ENCODE measurements at regions of chr5 and their contacts with region 1.

Region 1: DNA sequence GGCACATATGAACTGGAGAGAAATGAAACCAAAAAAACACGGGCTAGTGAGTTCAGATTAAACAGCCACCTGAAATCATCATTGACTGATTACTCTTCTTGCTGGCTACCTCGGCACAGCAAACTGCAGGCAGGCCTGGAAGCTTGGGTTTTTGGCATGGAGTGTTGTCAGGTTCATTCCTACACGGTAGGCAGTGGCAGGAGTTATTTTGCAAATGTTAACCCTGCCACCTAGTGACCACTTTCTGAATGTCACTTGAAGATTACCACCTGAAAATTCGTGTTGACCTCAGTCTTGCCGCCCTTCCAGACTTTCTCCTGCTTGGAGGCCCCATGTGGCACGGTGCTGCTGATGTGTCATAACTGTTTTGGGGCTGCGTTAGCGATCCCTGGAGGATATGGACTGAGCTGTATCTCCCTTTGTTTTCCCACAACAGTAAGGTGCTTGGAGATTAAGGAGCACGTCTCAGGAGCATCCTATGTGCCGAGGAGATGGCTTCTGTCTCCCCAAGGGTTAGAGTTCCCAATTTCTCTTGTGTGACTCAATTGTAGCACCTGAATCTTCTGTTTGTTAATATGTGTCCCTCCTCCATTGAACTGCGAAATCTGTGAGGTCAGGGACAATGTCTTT is 12.7 kb upstream of the CD180 start:
- DNase-seq: peak; percentile 87
- H3K4me3 ChIP-seq: no peak overlapping the region
- H3K27ac ChIP-seq: no peak overlapping the region
- H3K4me1 ChIP-seq: peaks cover 55% of the 10 kb centered on the region
- CTCF ChIP-seq: peak; percentile 85

Region 2: DNA sequence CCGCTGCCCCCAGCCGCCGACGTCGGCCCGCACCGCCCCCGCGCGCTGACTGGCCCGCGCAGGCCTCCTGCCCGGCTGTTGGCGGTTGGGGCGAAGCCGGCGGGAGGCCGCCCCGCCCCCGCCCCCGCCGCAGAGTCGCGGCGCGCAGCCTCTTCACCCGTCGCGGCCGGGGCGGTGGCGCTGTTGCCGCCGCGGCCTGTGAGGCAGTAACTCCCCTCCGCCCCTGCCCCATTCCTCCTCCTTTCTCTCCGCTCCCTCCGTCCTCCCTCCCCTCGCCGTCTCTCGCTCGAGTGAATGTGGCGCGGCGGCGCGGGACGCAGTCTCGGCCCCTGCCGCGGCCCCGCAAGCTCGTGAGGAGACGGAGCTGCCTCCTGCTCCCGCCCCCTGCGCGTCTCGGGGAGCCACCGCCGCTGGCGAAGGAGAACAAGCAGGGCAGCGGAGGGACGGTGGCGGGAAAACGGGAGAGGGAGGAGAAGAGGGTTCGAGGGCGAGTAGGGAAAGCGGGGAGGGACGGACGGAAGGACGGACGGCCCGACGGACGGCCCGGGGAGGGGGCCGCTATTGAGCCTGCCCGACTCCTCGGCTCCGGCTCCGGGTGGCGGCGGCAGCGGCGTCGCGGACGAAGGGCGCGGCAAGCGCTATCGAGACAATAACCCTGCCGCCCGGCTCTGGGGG is 1283.5 kb before region 1 on chr5:
- CTCF ChIA-PET with region 1: no interaction called
- POLR2A ChIA-PET with region 1: interaction called, 3 read pairs
- intact Hi-C with region 1: loop called (anchors 10 kb)
- DNase-seq: peak; percentile 92
- H3K4me3 ChIP-seq: peak overlapping the region; percentile 83
- H3K27ac ChIP-seq: peak overlapping the region; percentile 97
- H3K4me1 ChIP-seq: peaks cover 30% of the 10 kb centered on the region
- CTCF ChIP-seq: peak; percentile 67

Region 3: DNA sequence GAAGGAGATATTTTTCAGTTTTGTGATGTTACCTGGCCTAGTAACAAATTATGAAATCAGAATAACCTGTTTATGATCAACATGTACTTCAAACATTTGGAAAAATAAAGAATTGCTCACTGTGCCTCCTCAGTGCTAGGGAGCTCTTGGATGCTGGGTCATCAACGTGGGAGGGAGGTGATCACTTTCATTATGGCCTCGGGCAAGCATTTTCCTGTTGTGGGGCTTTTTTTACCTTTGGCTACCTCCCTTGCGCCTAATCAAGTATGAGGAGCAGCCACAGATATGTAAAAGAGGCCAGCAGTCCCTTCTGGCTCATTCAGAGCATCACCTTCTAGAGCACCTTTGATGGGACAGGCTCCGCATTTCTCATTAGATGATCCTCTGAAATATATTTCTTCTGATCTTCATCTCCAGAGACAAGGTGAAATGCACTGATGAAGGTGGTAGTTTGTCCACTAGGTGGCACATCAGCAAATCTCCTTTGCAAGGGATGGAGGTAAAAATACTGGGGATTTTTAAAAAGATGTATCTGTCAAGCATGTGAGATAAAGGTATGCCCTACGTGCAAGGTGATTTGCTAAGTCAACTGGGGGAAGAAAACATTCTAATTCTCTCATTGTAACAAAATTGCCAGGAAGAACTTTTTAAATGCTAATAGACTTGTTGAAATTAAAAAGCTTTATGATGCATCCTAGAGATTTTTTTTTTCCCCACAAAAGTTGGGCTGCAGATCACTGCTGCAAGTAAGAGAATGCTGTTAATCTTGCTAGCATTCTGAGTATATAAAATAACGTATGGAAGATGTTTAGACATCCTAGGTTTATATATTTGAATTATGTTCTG is 394.9 kb before region 1 on chr5:
- CTCF ChIA-PET with region 1: no interaction called
- POLR2A ChIA-PET with region 1: no interaction called
- intact Hi-C with region 1: loop called (anchors 1 kb)
- DNase-seq: peak; percentile 54
- H3K4me3 ChIP-seq: no peak overlapping the region
- H3K27ac ChIP-seq: no peak overlapping the region
- H3K4me1 ChIP-seq: no peaks in the 10 kb centered on the region
- CTCF ChIP-seq: peak; percentile 85

Region 4: DNA sequence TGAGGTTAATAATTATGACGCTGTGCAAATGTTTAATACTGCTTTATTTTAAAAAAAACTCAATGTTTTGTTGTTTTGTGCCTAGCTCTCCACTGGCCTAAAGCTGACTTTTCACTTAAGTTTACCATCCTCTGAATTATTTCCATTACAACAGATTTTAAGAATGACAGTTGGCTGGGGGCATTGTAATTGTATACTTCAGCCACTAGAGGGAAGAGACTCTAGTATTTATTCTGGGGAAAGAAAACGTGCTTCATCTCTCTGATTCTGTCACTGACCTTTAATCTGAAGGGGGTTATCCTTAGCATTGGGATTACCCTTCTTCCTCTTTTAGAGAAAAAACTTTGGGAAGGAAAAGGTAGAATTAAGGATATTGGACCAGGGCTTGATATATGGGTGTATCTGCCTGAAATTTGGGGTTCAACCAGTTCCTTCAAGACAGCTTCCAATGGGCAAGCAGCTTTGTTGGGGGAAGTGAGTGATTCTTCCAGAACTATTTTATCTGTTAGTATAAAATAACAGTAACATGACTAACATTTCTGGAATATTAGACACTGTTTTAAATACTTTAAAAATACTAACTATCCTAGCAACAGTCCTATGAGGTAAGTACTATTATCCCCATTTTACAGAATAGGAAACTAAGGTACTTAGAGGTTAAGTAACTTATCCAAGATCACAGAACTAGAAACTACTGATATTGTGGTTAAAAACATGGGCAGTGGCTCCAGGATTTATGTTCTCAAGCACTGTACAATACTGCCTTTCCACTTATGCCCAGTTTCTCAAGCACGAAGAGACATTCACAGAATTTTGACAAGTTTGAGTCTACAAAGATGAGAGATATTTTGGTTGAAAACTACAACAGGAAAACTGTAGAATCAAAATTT is 221.1 kb before region 1 on chr5:
- CTCF ChIA-PET with region 1: no interaction called
- POLR2A ChIA-PET with region 1: no interaction called
- intact Hi-C with region 1: loop called (anchors 1 kb)
- DNase-seq: peak; percentile 55
- H3K4me3 ChIP-seq: no peak overlapping the region
- H3K27ac ChIP-seq: no peak overlapping the region
- H3K4me1 ChIP-seq: no peaks in the 10 kb centered on the region
- CTCF ChIP-seq: peak; percentile 89

Region 5: GRCh38 chr5:67156976-67157583 is 52.2 kb before region 1 on chr5:
- CTCF ChIA-PET with region 1: interaction called, 4 read pairs
- POLR2A ChIA-PET with region 1: interaction called, 4 read pairs
- intact Hi-C with region 1: loop called (anchors 1 kb)
- DNase-seq: peak; percentile 68
- H3K4me3 ChIP-seq: no peak overlapping the region
- H3K27ac ChIP-seq: no peak overlapping the region
- H3K4me1 ChIP-seq: no peaks in the 10 kb centered on the region
- CTCF ChIP-seq: peak; percentile 99

Region 6: GRCh38 chr5:67188274-67189078 is 20.8 kb before region 1 on chr5:
- CTCF ChIA-PET with region 1: interaction called, 5 read pairs
- POLR2A ChIA-PET with region 1: interaction called, 17 read pairs
- intact Hi-C with region 1: no loop called
- DNase-seq: no peak
- H3K4me3 ChIP-seq: peak overlapping the region; percentile 35
- H3K27ac ChIP-seq: peak overlapping the region; percentile 51
- H3K4me1 ChIP-seq: peaks cover 65% of the 10 kb centered on the region
- CTCF ChIP-seq: no peak